ENCODE measurements at regions of chrX and their contacts with region 1.

Region 1: DNA sequence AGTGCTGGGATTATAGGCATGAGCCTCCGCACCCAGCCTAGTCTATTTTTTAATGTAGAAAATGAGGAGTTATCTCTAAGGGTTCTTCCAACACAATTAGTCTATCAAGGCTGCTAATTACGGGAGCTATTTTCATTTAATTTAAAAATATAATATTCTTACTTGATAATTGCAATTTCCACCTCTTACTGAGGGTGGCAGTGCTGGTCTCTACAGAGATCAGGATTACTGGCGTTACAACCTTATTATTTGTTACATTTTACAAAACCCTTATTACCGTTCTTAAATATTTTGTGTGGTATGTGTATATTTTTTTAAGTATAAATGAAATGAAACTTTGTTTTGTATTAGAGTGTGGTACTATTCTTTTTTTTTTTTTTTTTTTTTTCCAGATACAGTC is 17.6 kb upstream of the GK start:
- DNase-seq: no peak
- H3K4me3 Mint-ChIP-seq: no peak overlapping the region
- H3K27ac Mint-ChIP-seq: no peak overlapping the region
- H3K4me1 Mint-ChIP-seq: peaks cover 3% of the 10 kb centered on the region
- H3K27me3 Mint-ChIP-seq: no peaks in the 10 kb centered on the region

Region 2: GRCh38 chrX:30504309-30504708 is 131.3 kb before region 1 on chrX:
- intact Hi-C with region 1: no loop called
- DNase-seq: no peak
- H3K4me3 Mint-ChIP-seq: no peak overlapping the region
- H3K27ac Mint-ChIP-seq: no peak overlapping the region
- H3K4me1 Mint-ChIP-seq: no peaks in the 10 kb centered on the region
- H3K27me3 Mint-ChIP-seq: peaks cover 11% of the 10 kb centered on the region

Region 3: DNA sequence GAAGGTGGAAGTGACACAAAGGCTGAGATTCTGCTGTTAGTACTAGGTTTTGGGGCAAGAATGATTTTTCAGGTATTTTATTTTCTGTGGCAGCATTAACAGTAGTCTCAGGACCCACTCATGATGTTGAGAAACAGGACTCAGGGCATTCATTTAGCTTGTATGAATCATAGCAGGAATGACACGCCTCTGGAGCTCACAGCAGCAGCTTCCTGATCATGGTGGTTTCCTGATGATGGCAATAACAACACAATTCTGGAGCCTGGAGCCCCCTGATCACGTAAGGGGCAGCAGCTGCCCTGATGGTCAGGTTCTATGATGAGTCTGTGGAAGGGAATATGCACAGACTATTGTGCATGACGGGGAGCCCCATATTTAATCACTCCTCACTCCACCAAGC is 105.0 kb before region 1 on chrX:
- intact Hi-C with region 1: no loop called
- DNase-seq: no peak
- H3K4me3 Mint-ChIP-seq: no peak overlapping the region
- H3K27ac Mint-ChIP-seq: no peak overlapping the region
- H3K4me1 Mint-ChIP-seq: no peaks in the 10 kb centered on the region
- H3K27me3 Mint-ChIP-seq: peaks cover under 1% of the 10 kb centered on the region

Region 4: GRCh38 chrX:30659421-30659820 is 23.8 kb after region 1 on chrX:
- intact Hi-C with region 1: loop called (anchors 2 kb)
- DNase-seq: no peak
- H3K4me3 Mint-ChIP-seq: peak overlapping the region; percentile 5
- H3K27ac Mint-ChIP-seq: peak overlapping the region; percentile 88
- H3K4me1 Mint-ChIP-seq: peaks cover 41% of the 10 kb centered on the region
- H3K27me3 Mint-ChIP-seq: no peaks in the 10 kb centered on the region

Region 5: DNA sequence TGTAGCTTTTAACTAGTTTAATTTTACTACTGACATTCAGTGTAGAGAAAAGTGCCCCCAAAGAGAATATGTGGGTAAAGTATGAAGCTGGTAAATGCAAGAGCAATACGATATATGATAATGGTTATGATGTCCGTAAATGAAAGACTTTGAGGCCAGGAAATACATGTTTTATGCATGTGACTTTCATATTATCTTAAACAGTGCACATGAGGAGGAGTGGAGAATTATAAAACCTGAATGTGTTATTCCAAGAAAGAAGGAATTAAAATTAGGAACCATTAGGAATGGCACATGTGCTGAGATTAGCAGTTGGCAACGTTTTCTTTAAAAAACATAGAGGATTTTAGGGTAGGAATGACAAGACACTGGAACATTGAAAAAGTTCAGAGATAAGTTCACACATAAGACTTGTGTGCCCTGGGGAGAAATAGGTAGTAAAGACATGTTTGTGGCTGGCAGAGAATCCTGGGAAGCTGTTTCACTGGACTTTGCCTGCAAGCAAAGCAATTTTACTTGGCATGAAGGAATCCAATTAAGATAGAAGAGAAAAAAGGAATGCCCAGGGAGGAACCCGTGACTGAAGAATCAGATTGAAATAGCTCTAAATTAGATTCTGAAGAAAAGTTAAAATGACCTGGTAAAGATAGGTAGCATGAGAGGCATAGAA is 37.6 kb after region 1 on chrX:
- intact Hi-C with region 1: loop called (anchors 5 kb)
- DNase-seq: no peak
- H3K4me3 Mint-ChIP-seq: no peak overlapping the region
- H3K27ac Mint-ChIP-seq: peak overlapping the region; percentile 26
- H3K4me1 Mint-ChIP-seq: peaks cover 7% of the 10 kb centered on the region
- H3K27me3 Mint-ChIP-seq: no peaks in the 10 kb centered on the region

Region 6: GRCh38 chrX:30751497-30751896 is 115.9 kb after region 1 on chrX:
- intact Hi-C with region 1: no loop called
- DNase-seq: no peak
- H3K4me3 Mint-ChIP-seq: no peak overlapping the region
- H3K27ac Mint-ChIP-seq: no peak overlapping the region
- H3K4me1 Mint-ChIP-seq: no peaks in the 10 kb centered on the region
- H3K27me3 Mint-ChIP-seq: peaks cover 3% of the 10 kb centered on the region

Region 7: GRCh38 chrX:31884535-31884934 is 1248.9 kb after region 1 on chrX:
- intact Hi-C with region 1: no loop called
- DNase-seq: no peak
- H3K4me3 Mint-ChIP-seq: no peak overlapping the region
- H3K27ac Mint-ChIP-seq: no peak overlapping the region
- H3K4me1 Mint-ChIP-seq: no peaks in the 10 kb centered on the region
- H3K27me3 Mint-ChIP-seq: no peaks in the 10 kb centered on the region

Measured in activated T-helper 2 cell treated with anti-CD3 and anti-CD28 coated beads, Interferon-gamma antibody, Interleukin-2, Interleukin-4, amounts not matched to agents 10 μg/mL and 5 μg/mL and 100 μg/mL, durations not matched to agents 14 hours and 24 hours and 36 hours (primary cell).